T-cell (primary cell): ENCODE measurements at regions of chr6 and their contacts with region 1.

Region 1: GRCh38 chr6:4272996-4273395 is 137.6 kb upstream of the ECI2 start:
- DNase-seq: no peak
- ATAC-seq: no peak
- H3K4me3 ChIP-seq: no peak overlapping the region
- H3K4me3 Mint-ChIP-seq: no peak overlapping the region
- H3K27ac ChIP-seq: no peak overlapping the region
- H3K27ac Mint-ChIP-seq: no peak overlapping the region
- H3K4me1 ChIP-seq: no peaks in the 10 kb centered on the region
- H3K4me1 Mint-ChIP-seq: no peaks in the 10 kb centered on the region
- H3K27me3 ChIP-seq: peaks cover 0 to 5% of the 10 kb centered on the region in 2 experiments
- H3K27me3 Mint-ChIP-seq: peaks cover 2 to 12% of the 10 kb centered on the region in 2 donors

Region 2: GRCh38 chr6:4351520-4352315 is 78.7 kb after region 1 on chr6:
- CTCF ChIA-PET with region 1: no interaction called
- POLR2A ChIA-PET with region 1: no interaction called
- DNase-seq: no peak
- ATAC-seq: no peak
- H3K4me3 ChIP-seq: no peak overlapping the region
- H3K4me3 Mint-ChIP-seq: no peak overlapping the region
- H3K27ac ChIP-seq: no peak overlapping the region
- H3K27ac Mint-ChIP-seq: no peak overlapping the region
- H3K4me1 ChIP-seq: no peaks in the 10 kb centered on the region
- H3K4me1 Mint-ChIP-seq: no peaks in the 10 kb centered on the region
- H3K27me3 ChIP-seq: peaks cover 0 to 10% of the 10 kb centered on the region in 2 experiments
- H3K27me3 Mint-ChIP-seq: peaks cover 0 to 18% of the 10 kb centered on the region in 2 donors

Region 3: DNA sequence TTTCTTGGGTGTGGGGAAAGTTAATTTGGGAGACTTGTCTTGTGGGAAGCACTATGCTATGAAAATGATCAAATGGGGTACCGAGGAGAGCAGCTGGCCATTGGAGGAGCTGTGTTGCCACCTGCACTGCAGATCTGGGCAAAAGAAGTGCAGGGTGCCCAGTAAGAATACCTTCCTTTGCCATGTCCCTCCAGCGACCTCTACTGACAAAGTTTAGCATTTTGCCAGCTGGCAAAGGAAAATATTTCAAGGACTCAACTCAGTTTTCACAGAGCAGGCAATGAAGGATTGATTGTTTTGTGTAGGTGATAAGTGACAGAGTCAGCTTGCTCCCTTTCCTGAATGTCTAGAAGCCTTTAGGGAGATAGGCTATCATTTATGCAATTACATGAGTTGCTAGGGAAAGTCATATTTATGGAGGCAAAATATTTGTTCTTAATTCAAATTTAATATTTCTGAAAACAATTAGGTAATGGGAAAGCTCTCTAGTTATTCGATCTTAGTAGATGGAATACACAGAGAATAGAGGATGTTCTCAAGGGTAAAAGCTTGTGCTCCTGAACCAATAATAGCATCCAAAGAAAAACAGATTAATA is 1106.7 kb after region 1 on chr6:
- CTCF ChIA-PET with region 1: interaction called in 1 of 2 experiments, 10 read pairs
- POLR2A ChIA-PET with region 1: no interaction called
- DNase-seq: peak in 1 of 35 experiments; percentile 11
- ATAC-seq: no peak
- H3K4me3 ChIP-seq: no peak overlapping the region
- H3K4me3 Mint-ChIP-seq: no peak overlapping the region
- H3K27ac ChIP-seq: no peak overlapping the region
- H3K27ac Mint-ChIP-seq: no peak overlapping the region
- H3K4me1 ChIP-seq: no peaks in the 10 kb centered on the region
- H3K4me1 Mint-ChIP-seq: peaks cover 5 to 18% (median 7%) of the 10 kb centered on the region in 3 donors
- H3K27me3 ChIP-seq: no peaks in the 10 kb centered on the region
- H3K27me3 Mint-ChIP-seq: no peaks in the 10 kb centered on the region